Calu3 (cell line): ENCODE measurements at regions of chr2 and their contacts with region 1.

Region 1: DNA sequence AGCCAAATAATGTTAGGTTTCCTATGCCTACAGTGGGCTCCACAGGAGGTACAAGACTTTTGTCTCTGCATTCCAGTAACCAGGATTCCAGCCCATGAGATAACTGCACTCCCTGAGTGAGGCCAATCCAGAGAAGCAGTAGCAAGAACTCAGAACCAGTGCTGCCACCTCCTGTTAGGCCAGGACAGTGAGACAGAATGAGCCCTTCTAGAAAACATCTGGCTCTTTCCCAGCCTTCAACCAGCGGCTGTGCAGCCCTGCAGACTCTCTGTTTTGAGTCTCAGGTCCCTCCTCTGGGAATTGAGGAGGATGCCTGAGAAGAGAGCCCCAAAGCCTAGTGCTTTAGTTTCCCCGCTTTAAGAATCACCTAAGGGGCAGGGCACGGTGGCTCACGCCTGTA is 44.2 kb downstream of the ARID5A start:
- DNase-seq: peak; percentile 66
- H3K4me3 Mint-ChIP-seq: no peak overlapping the region
- H3K27ac Mint-ChIP-seq: no peak overlapping the region
- H3K4me1 Mint-ChIP-seq: peaks cover 5% of the 10 kb centered on the region
- H3K27me3 Mint-ChIP-seq: no peaks in the 10 kb centered on the region
- CTCF ChIP-seq: peak; percentile 58

Region 2: GRCh38 chr2:96116879-96117697 is 463.7 kb before region 1 on chr2:
- CTCF ChIA-PET with region 1: no interaction called
- intact Hi-C with region 1: no loop called
- DNase-seq: peak; percentile 80
- H3K4me3 Mint-ChIP-seq: peak overlapping the region; percentile 60
- H3K27ac Mint-ChIP-seq: no peak overlapping the region
- H3K4me1 Mint-ChIP-seq: no peaks in the 10 kb centered on the region
- H3K27me3 Mint-ChIP-seq: peaks cover 74% of the 10 kb centered on the region
- CTCF ChIP-seq: peak; percentile 86

Region 3: DNA sequence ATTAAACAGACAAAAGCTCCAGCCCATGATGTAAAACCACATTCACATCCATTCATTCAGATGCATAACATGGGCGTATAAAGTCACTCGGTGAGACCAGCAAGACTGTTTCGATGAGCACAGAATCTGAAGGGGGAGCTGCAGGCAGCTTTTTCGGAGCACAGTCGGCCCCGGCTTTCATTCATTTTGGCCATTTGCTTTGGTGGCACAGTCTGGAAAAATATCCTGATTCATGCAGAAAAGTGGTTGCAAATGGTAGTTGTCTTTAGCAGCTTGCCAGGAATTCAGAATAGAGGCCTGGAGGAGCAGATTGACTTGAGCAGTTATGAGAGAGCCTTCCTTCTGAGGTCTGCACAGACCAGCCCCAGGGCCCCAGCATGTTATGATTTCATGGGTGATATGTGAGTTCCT is 33.0 kb before region 1 on chr2:
- CTCF ChIA-PET with region 1: interaction called, 25 read pairs
- intact Hi-C with region 1: loop called (anchors 5 kb)
- DNase-seq: no peak
- H3K4me3 Mint-ChIP-seq: no peak overlapping the region
- H3K27ac Mint-ChIP-seq: no peak overlapping the region
- H3K4me1 Mint-ChIP-seq: no peaks in the 10 kb centered on the region
- H3K27me3 Mint-ChIP-seq: no peaks in the 10 kb centered on the region
- CTCF ChIP-seq: no peak

Region 4: GRCh38 chr2:97688062-97688827 is 1107.5 kb after region 1 on chr2:
- CTCF ChIA-PET with region 1: no interaction called
- intact Hi-C with region 1: no loop called
- DNase-seq: no peak
- H3K4me3 Mint-ChIP-seq: no peak overlapping the region
- H3K27ac Mint-ChIP-seq: no peak overlapping the region
- H3K4me1 Mint-ChIP-seq: no peaks in the 10 kb centered on the region
- H3K27me3 Mint-ChIP-seq: peaks cover 9% of the 10 kb centered on the region
- CTCF ChIP-seq: no peak